Vagina (tissue), 2 donors: ENCODE measurements at regions of chr16 and their contacts with region 1.

Region 1: DNA sequence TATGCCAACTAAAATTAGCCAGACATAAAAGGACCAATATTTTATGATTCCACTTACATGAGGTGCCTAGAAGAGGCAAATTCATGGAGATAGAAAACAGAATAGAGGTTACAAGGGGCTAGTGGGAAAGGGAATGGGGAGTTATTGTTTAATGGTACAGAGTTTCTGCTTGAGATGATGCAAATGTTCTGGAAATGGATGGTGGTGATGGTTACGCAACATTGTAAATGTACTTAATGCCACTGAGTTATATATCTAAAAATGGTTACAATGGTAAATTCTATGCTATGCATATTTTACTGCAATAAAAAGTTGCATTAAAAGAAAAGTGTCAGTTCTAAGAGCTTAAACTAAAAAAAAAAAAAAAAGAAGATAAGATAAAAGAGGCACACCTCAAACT is 17.9 kb downstream of the MT1X start:
- DNase-seq: no peak
- H3K4me3 ChIP-seq: no peak overlapping the region
- H3K27ac ChIP-seq: no peak overlapping the region
- H3K4me1 ChIP-seq: no peaks in the 10 kb centered on the region
- H3K27me3 ChIP-seq: no peaks in the 10 kb centered on the region
- CTCF ChIP-seq: no peak
- POLR2A ChIP-seq: no peak

Region 2: GRCh38 chr16:56600398-56600999 is 99.7 kb before region 1 on chr16:
- intact Hi-C with region 1: loop called (anchors 5 kb)
- DNase-seq: no peak
- H3K4me3 ChIP-seq: no peak overlapping the region
- H3K27ac ChIP-seq: no peak overlapping the region
- H3K4me1 ChIP-seq: peaks cover 2% of the 10 kb centered on the region
- H3K27me3 ChIP-seq: no peaks in the 10 kb centered on the region
- CTCF ChIP-seq: peak in 2 of 3 experiments; percentile 5 to 62
- POLR2A ChIP-seq: no peak

Region 3: GRCh38 chr16:56898847-56899246 is 198.7 kb after region 1 on chr16:
- intact Hi-C with region 1: no loop called
- DNase-seq: no peak
- H3K4me3 ChIP-seq: no peak overlapping the region
- H3K27ac ChIP-seq: no peak overlapping the region
- H3K4me1 ChIP-seq: no peaks in the 10 kb centered on the region
- H3K27me3 ChIP-seq: no peaks in the 10 kb centered on the region
- CTCF ChIP-seq: no peak
- POLR2A ChIP-seq: no peak

Region 4: DNA sequence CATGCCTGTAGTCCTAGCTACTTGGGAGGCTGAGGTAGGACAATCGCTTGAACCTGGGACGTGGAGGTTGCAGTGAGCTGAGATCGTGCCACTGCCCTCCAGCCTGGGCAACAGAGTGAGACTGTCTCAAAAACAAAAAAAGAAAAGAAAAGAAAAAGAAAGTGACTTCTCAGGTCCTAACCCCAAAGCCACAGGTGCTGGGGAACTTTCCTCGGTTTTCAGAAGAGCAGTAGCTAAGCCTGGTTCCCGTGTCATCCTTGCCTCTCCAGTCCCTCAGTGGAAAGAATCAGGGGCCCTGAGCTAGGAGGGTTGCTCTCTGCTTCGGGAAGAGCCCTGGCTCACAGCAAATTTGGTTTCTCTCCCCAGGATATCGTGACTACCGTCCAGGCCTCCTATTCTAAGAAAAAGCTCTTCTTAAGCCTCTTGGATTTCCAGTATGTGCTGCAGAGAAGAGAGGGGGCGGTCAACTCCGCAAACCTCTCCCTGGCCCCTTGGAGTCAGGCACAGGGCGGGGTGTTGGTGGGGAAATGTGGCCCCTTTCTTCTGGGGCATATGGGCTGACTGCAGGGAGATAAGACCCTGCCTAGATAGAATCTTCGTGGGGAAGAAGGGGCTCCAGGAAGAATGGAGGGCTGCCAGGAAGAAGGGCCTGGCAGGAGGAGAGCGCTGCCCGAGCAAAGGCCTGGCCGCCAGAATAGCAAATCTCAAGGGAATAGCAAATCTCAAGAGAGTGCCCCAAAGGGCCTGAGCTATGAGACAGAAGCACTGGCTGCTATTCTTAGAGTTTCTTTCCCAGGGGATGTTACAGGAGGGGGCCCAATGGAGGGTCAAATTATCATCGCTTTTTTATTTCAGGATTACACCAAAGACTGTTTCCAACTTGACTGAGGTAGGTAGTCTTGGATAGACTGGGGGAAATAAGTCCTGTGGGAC is 280.9 kb after region 1 on chr16:
- intact Hi-C with region 1: loop called (anchors 5 kb)
- DNase-seq: no peak
- H3K4me3 ChIP-seq: no peak overlapping the region
- H3K27ac ChIP-seq: no peak overlapping the region
- H3K4me1 ChIP-seq: peaks cover 22% of the 10 kb centered on the region
- H3K27me3 ChIP-seq: no peaks in the 10 kb centered on the region
- CTCF ChIP-seq: no peak
- POLR2A ChIP-seq: no peak